ENCODE measurements at regions of chr6 and their contacts with region 1.

Region 1: GRCh38 chr6:42547407-42548329 is 16.2 kb upstream of the UBR2 start:
- DNase-seq: peak; percentile 64 to 91 (median 83)
- ATAC-seq: peak; percentile 96 to 99 (median 99)
- H3K4me3 ChIP-seq: peak overlapping the region; percentile 35 to 50
- H3K4me3 Mint-ChIP-seq: peak overlapping the region; percentile 60 to 71 (median 62)
- H3K27ac ChIP-seq: no peak overlapping the region
- H3K27ac Mint-ChIP-seq: peak overlapping the region in 1 of 2 donors; percentile 61
- H3K4me1 ChIP-seq: peaks cover 3 to 12% of the 10 kb centered on the region in 2 experiments
- H3K4me1 Mint-ChIP-seq: peaks cover 10 to 12% (median 12%) of the 10 kb centered on the region in 3 donors
- H3K27me3 ChIP-seq: no peaks in the 10 kb centered on the region
- H3K27me3 Mint-ChIP-seq: peaks cover 2 to 8% of the 10 kb centered on the region in 2 donors

Region 2: GRCh38 chr6:42260972-42261371 is 286.7 kb before region 1 on chr6:
- CTCF ChIA-PET with region 1: interaction called, 11 to 51 read pairs
- POLR2A ChIA-PET with region 1: no interaction called
- DNase-seq: peak in 22 of 35 experiments; percentile 11 to 53 (median 34)
- ATAC-seq: peak in 2 of 4 experiments; percentile 72 to 78
- H3K4me3 ChIP-seq: no peak overlapping the region
- H3K4me3 Mint-ChIP-seq: no peak overlapping the region
- H3K27ac ChIP-seq: no peak overlapping the region
- H3K27ac Mint-ChIP-seq: peak overlapping the region in 1 of 2 donors; percentile 68
- H3K4me1 ChIP-seq: peaks cover 0 to 4% of the 10 kb centered on the region in 2 experiments
- H3K4me1 Mint-ChIP-seq: peaks cover 4 to 11% (median 10%) of the 10 kb centered on the region in 3 donors
- H3K27me3 ChIP-seq: no peaks in the 10 kb centered on the region
- H3K27me3 Mint-ChIP-seq: no peaks in the 10 kb centered on the region

Region 3: DNA sequence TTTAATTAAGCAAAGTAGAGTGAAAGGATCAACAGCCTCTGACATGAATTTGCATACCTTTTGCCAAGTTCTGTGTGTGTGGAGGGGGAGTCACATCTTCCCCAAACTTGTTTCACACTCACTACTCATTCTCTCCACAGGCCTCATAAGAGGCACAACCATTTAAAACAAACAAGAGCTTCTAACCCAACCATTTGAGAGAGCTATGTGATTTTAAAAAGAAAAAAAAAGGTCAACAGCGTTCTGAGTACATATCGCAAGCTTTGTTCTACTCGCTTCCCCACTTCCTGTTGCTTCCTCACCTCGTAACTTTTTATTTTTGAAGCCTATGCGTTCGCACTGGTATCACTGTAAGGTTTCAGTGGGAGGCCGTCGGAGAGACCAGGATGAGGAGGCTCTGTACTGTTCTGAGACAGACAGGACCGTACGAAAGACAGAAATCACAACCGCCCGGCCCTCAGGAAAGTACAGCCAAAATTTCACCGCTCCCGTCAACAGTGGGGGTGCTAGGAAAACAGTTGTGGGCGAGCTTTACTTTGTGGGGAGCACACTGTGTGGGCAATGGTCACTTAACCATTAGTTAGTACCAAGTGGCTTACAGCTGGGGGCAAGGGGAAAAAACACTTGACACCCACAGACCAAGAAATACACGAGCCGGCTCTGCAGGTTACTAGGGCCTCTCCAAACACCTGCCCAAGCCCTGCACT is 157.3 kb before region 1 on chr6:
- CTCF ChIA-PET with region 1: interaction called in 1 of 2 experiments, 11 read pairs
- POLR2A ChIA-PET with region 1: no interaction called
- DNase-seq: peak; percentile 40 to 87 (median 62)
- ATAC-seq: peak; percentile 81 to 86 (median 84)
- H3K4me3 ChIP-seq: peak overlapping the region; percentile 12 to 35
- H3K4me3 Mint-ChIP-seq: peak overlapping the region; percentile 48 to 76 (median 65)
- H3K27ac ChIP-seq: peak overlapping the region; percentile 90
- H3K27ac Mint-ChIP-seq: peak overlapping the region; percentile 99 to 100
- H3K4me1 ChIP-seq: peaks cover 75 to 86% of the 10 kb centered on the region in 2 experiments
- H3K4me1 Mint-ChIP-seq: peaks cover 97 to 100% (median 99%) of the 10 kb centered on the region in 3 donors
- H3K27me3 ChIP-seq: no peaks in the 10 kb centered on the region
- H3K27me3 Mint-ChIP-seq: no peaks in the 10 kb centered on the region

Region 4: DNA sequence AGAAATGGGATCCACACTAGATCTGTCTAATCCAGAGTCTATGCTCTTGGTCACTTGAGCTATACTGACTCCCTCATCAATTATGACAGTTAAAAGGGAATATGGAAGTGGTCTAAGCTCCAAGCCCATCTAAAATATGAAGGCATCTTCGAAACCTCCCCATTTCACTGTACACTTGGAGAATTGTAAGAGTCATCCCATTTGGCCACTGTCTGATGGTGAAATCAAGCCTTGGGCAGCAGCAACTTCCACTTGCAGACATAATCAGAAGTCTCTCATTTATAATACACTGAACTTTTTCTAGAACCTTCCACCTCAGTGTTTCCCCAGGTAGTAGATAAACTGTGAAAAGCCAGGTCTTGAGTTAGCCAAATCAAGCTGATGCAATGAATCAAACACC is 10.1 kb before region 1 on chr6:
- CTCF ChIA-PET with region 1: interaction called, 6 to 12 read pairs
- POLR2A ChIA-PET with region 1: no interaction called
- DNase-seq: no peak
- ATAC-seq: no peak
- H3K4me3 ChIP-seq: no peak overlapping the region
- H3K4me3 Mint-ChIP-seq: no peak overlapping the region
- H3K27ac ChIP-seq: no peak overlapping the region
- H3K27ac Mint-ChIP-seq: no peak overlapping the region
- H3K4me1 ChIP-seq: no peaks in the 10 kb centered on the region
- H3K4me1 Mint-ChIP-seq: no peaks in the 10 kb centered on the region
- H3K27me3 ChIP-seq: no peaks in the 10 kb centered on the region
- H3K27me3 Mint-ChIP-seq: peaks cover 0 to 4% of the 10 kb centered on the region in 2 donors

Measured in T-cell (primary cell).